PC-9 (cell line): ENCODE measurements at regions of chr20 and their contacts with region 1.

Region 1: DNA sequence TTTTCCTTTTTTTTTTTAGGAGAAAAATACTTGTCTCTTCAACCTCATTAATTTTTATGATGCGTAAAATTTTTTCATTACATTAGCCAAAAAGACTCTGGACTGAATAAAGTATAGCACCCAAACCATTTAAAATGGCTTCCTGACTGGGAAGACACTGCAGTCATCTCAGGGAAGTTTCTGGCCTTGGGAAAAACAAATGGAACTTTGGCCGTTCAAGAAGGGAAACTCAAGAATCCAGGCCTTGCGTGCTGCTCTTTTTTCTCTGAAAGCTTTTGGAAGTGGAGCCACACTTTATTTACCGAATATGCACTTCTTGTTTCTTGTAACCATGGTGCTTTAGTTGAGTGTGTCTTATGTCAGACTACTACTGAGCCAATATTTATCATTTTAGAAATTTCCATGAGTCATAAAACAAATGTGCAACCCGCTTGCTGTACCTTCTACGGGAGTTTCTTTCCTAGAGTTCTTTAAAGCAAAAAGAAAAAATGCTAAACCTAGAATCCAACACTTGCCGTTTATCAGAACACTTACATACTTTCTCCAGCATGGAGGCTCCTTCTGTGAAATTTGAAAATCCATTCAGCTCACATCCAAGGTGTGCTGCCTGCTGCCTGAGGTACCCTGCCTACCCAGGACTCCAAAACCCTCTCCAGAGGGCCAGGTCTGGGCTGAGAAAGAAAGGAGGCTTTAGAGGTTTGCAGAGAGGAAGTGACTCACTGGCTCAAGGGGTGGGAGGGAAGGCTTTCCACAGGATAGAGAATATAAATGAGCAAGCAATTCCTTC is 11.5 kb upstream of the DSTN start:
- DNase-seq: peak; percentile 74 to 90
- H3K4me3 ChIP-seq: peak overlapping the region; percentile 51
- H3K27ac ChIP-seq: peak overlapping the region; percentile 92
- H3K4me1 ChIP-seq: peaks cover 82% of the 10 kb centered on the region
- H3K27me3 ChIP-seq: no peaks in the 10 kb centered on the region
- CTCF ChIP-seq: no peak

Region 2: DNA sequence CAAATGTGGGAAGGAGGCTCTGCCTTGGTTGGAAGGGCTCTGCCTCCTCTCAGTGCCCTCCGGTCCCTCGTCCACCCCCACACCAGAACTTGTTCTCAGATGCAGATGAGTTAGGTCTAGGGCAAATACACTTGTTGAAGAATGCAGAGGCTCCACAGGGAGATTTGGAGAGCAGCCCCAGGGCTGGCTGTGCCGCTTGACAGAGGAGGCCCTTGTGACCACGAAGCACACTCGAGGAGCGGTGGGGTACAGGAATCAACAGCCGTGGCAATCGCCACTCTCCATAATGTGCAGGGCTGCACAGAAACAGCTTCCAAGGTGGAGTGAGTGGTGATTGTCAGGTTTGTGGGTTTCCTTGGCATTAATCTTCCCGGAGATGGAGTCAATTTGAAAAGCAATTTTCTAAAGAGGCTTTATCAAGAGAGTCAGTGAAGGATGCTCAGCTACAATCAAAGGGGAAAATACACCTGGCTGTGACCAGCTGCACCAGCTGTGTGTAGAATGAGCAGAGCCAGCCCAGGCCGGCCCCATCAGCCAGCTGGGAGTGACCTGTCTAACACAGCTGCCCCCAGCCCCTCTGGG is 86.7 kb before region 1 on chr20:
- CTCF ChIA-PET with region 1: no interaction called
- POLR2A ChIA-PET with region 1: no interaction called
- intact Hi-C with region 1: no loop called
- DNase-seq: no peak
- H3K4me3 ChIP-seq: no peak overlapping the region
- H3K27ac ChIP-seq: no peak overlapping the region
- H3K4me1 ChIP-seq: no peaks in the 10 kb centered on the region
- H3K27me3 ChIP-seq: peaks cover 78% of the 10 kb centered on the region
- CTCF ChIP-seq: no peak

Region 3: DNA sequence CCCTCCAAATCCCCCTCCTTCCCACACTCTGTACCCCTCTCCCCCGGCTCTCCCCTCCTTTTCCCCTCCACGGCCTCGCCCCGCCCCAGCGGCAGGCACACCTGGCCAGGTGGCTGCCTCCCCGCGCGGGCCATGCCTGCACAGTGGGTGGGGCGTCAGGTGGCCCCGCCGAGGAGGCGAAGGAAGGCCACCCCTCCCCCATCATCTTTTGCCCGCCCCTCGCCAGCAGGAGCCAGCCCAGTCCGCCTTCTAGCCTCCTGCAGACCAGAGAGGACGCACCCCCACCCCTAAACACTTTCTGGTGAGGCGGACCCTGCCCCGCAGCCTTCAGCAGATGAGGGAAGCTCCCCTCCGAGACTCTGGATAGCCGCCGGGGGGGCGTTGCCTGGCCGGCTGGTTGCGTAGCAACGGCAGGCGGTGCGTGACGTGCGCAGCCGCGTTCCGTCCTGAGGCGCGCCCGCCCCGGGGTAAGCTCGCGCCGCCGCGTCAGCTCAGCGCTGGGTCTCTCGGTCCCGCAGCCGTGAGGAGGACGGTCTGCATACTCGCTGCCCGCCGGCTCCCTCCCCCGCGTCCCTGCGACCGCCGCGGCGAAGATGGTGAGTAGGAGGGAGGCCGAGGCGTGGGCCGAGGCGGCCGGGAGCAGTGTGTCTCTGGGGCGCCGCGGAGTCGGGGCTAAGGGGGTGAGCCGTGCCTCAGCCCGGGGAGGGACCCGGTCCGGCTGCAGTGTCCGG is 11.4 kb after region 1 on chr20 and contains the start of gene DSTN:
- CTCF ChIA-PET with region 1: interaction called, 3 read pairs
- POLR2A ChIA-PET with region 1: interaction called, 78 read pairs
- intact Hi-C with region 1: loop called (anchors 1 kb)
- DNase-seq: peak; percentile 91 to 97
- H3K4me3 ChIP-seq: peak within 1 kb of the TSS; percentile 95
- H3K27ac ChIP-seq: peak within 1 kb of the TSS; percentile 84
- H3K4me1 ChIP-seq: peaks cover 54% of the 10 kb centered on the region
- H3K27me3 ChIP-seq: no peaks in the 10 kb centered on the region
- CTCF ChIP-seq: no peak
- total RNA-seq, gene DSTN: 296 and 366 TPM in 2 replicates

Region 4: GRCh38 chr20:17594443-17594842 is 36.1 kb after region 1 on chr20:
- CTCF ChIA-PET with region 1: no interaction called
- POLR2A ChIA-PET with region 1: no interaction called
- intact Hi-C with region 1: loop called (anchors 5 kb)
- DNase-seq: peak; percentile 69 to 88
- H3K4me3 ChIP-seq: 0 out of 2 replicates have a peak overlapping the region, but pooled peaks have one; percentile 15
- H3K27ac ChIP-seq: peak overlapping the region; percentile 39
- H3K4me1 ChIP-seq: peaks cover 35% of the 10 kb centered on the region
- H3K27me3 ChIP-seq: no peaks in the 10 kb centered on the region
- CTCF ChIP-seq: no peak

Region 5: GRCh38 chr20:17604852-17605660 is 46.7 kb after region 1 on chr20:
- CTCF ChIA-PET with region 1: no interaction called
- POLR2A ChIA-PET with region 1: no interaction called
- intact Hi-C with region 1: loop called (anchors 1 kb)
- DNase-seq: peak; percentile 41 to 82
- H3K4me3 ChIP-seq: no peak overlapping the region
- H3K27ac ChIP-seq: peak overlapping the region; percentile 40
- H3K4me1 ChIP-seq: peaks cover 31% of the 10 kb centered on the region
- H3K27me3 ChIP-seq: no peaks in the 10 kb centered on the region
- CTCF ChIP-seq: no peak

Region 6: GRCh38 chr20:17843246-17844132 is 285.1 kb after region 1 on chr20:
- CTCF ChIA-PET with region 1: no interaction called
- POLR2A ChIA-PET with region 1: no interaction called
- intact Hi-C with region 1: loop called (anchors 10 kb)
- DNase-seq: peak in 1 of 2 experiments; percentile 78
- H3K4me3 ChIP-seq: no peak overlapping the region
- H3K27ac ChIP-seq: no peak overlapping the region
- H3K4me1 ChIP-seq: 0 out of 2 replicates have a peak, but pooled peaks cover 7% of the 10 kb centered on the region
- H3K27me3 ChIP-seq: no peaks in the 10 kb centered on the region
- CTCF ChIP-seq: no peak